Vagina (tissue), 2 donors: ENCODE measurements at regions of chr22 and their contacts with region 1.

Region 1: DNA sequence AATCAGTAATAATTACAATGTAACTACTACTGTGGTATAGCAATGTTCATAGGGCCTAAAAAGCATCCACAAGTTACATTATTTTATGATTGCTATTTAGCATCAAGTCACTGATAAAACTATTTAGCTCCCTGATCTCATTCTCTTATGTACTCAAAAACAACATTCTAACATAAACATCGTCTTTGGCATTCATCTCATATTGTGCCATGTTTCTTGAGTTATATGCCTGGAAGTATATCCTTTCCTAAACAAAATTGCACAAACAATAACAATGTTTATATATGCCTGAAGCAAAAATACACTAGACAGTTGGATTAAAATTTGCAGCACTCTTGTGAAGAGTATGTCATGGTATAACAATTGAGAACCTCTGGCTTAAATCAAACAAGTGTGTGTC is 34.1 kb downstream of the HORMAD2 start:
- DNase-seq: no peak
- H3K4me3 ChIP-seq: no peak overlapping the region
- H3K27ac ChIP-seq: no peak overlapping the region
- H3K4me1 ChIP-seq: no peaks in the 10 kb centered on the region
- H3K27me3 ChIP-seq: no peaks in the 10 kb centered on the region
- CTCF ChIP-seq: no peak
- POLR2A ChIP-seq: no peak

Region 2: DNA sequence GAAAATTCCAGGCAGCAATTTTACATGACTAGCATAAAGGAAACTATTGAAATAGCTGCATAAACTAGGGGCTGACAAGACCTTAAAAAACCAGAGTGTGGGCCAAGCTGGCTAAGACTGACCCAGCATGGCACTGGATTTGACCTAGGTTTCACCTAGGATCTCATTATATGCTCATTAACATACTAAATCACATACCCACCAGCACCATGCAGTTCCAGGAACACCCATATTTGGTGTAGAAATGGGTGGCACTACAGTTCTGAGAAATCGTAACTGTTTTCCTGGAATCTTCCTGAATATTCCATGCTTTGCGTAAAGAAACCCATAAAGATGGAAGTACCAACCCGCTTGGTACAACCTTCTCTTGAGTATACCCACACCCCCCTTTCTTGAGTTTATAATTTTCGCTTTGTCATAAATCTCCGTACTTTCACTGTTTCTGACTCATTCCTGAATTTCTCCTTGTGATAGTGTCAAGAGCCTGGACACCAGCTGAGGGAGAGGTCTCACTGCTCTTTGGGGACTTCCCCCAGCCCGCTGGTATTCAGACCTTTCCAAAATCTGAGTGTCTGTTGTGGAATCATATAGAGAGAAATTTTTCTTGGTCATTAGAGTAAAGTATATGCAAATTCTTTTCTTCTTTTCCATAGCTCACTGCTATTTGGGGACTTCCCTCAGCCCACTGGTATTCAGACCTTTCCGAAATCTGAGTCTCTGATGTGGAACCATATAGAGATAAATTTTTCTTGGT is 176.2 kb before region 1 on chr22:
- intact Hi-C with region 1: no loop called
- DNase-seq: no peak
- H3K4me3 ChIP-seq: no peak overlapping the region
- H3K27ac ChIP-seq: no peak overlapping the region
- H3K4me1 ChIP-seq: peaks cover 51% of the 10 kb centered on the region
- H3K27me3 ChIP-seq: no peaks in the 10 kb centered on the region
- CTCF ChIP-seq: no peak
- POLR2A ChIP-seq: no peak

Region 3: GRCh38 chr22:30262917-30263741 is 148.8 kb after region 1 on chr22:
- intact Hi-C with region 1: loop called (anchors 5 kb)
- DNase-seq: no peak
- H3K4me3 ChIP-seq: no peak overlapping the region
- H3K27ac ChIP-seq: peak overlapping the region; percentile 17
- H3K4me1 ChIP-seq: peaks cover 23% of the 10 kb centered on the region
- H3K27me3 ChIP-seq: no peaks in the 10 kb centered on the region
- CTCF ChIP-seq: peak; percentile 98 to 99 (median 98)
- POLR2A ChIP-seq: no peak

Region 4: GRCh38 chr22:31602259-31602952 is 1488.0 kb after region 1 on chr22:
- intact Hi-C with region 1: no loop called
- DNase-seq: no peak
- H3K4me3 ChIP-seq: no peak overlapping the region
- H3K27ac ChIP-seq: no peak overlapping the region
- H3K4me1 ChIP-seq: peaks cover 10% of the 10 kb centered on the region
- H3K27me3 ChIP-seq: no peaks in the 10 kb centered on the region
- CTCF ChIP-seq: no peak
- POLR2A ChIP-seq: no peak